ENCODE measurements at regions of chr16 and their contacts with region 1.

Region 1: DNA sequence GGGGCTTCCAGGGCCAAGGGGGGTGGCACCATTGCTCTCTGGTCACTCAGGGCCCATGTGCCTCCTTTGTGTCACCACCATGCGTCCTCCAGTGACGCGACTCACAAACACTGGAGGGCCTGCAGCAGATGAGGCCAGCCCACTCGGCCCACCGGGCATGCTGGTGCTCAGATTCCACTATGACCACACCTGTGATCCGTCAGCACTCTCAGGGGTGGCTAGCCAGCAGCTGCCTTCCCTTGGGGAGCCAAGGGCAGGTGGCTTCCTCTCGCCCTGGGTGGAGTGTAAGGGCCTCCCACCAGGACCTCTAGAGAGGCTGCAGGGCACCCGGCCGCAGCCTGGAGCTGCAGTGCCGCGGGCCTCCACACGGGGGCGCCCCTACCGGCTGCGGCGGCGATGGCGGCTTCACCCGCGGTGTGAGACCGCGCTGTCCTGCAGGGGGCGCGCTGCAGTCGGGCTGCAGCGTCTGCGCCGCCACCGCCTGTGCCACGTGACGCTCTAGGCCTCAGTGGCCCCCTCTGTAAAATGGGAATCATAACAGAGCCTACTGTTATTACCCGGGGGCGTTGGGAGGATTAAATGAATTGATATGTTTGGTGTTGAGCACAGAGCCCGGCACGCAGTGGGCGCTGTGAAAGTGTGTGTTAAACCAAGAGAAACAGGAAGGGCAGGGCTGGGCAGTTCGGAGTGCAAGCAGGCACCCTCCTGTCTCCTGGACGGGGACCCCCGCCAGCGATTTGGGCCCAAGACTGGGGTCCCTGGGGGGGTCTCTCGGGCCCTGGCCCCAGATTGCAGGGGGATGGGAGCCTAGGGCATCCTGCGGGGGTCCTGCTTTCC is 192.4 kb upstream of the GSE1 start:
- DNase-seq: peak; percentile 38 to 43
- H3K4me3 ChIP-seq: no peak overlapping the region
- H3K27ac ChIP-seq: peak overlapping the region in 1 of 3 donors; percentile 42
- H3K4me1 ChIP-seq: peaks cover 3 to 26% of the 10 kb centered on the region in 2 donors
- H3K27me3 ChIP-seq: no peaks in the 10 kb centered on the region
- CTCF ChIP-seq: peak; percentile 69 to 99 (median 98)
- POLR2A ChIP-seq: no peak

Region 2: GRCh38 chr16:85491058-85491771 is 70.5 kb after region 1 on chr16:
- intact Hi-C with region 1: loop called (anchors 10 kb)
- DNase-seq: no peak
- H3K4me3 ChIP-seq: no peak overlapping the region
- H3K27ac ChIP-seq: peak overlapping the region; percentile 75 to 91 (median 83)
- H3K4me1 ChIP-seq: peaks cover 17 to 23% of the 10 kb centered on the region in 2 donors
- H3K27me3 ChIP-seq: no peaks in the 10 kb centered on the region
- CTCF ChIP-seq: peak in 2 of 6 experiments; percentile 23 to 32
- POLR2A ChIP-seq: no peak

Region 3: DNA sequence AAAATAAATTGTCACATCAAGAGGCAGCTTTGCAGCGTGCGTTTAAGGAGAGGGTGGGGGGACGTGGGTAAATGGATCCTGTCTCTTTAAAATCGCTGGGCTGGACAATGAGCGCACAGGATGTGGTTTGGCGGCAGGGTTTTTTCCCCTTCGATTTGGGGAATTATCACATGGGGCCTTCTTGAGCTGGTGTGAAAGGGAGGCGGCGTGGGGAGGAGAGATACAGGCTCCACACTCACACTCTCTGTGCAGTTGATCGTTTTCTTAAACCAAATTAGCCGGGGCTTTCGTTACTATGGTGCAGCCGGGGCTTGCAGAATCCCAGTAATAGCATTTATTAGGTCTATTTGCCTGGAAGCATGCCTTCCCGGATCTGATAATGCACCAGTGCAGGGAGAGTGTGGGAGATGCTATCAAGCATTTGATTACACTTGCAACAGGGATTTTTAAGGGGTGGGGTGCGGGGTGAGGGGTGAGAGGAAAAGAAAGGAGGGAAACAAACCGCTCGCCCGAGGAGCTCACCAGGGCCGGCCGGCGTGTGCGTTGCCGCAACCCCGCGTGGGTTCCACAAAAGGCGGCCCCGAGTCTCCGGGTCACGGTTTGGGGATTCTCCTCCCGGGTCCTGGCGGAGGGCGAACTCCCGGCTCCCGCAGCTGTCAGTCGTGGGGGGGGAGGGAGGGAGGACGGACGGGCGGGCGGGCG is 133.5 kb after region 1 on chr16:
- intact Hi-C with region 1: loop called (anchors 10 kb)
- DNase-seq: peak; percentile 61 to 63
- H3K4me3 ChIP-seq: peak overlapping the region in 2 of 3 donors; percentile 70 to 85
- H3K27ac ChIP-seq: peak overlapping the region; percentile 84 to 96 (median 96)
- H3K4me1 ChIP-seq: peaks cover 24 to 29% of the 10 kb centered on the region in 2 donors
- H3K27me3 ChIP-seq: no peaks in the 10 kb centered on the region
- CTCF ChIP-seq: no peak
- POLR2A ChIP-seq: peak in 1 of 2 donors; percentile 43

Region 4: GRCh38 chr16:85573696-85574641 is 153.2 kb after region 1 on chr16:
- intact Hi-C with region 1: no loop called
- DNase-seq: peak; percentile 80 to 88
- H3K4me3 ChIP-seq: no peak overlapping the region
- H3K27ac ChIP-seq: peak overlapping the region; percentile 73 to 84 (median 74)
- H3K4me1 ChIP-seq: peaks cover 61 to 76% of the 10 kb centered on the region in 2 donors
- H3K27me3 ChIP-seq: no peaks in the 10 kb centered on the region
- CTCF ChIP-seq: no peak
- POLR2A ChIP-seq: peak in 1 of 2 donors; percentile 42

Region 5: GRCh38 chr16:85610508-85611332 is 190.0 kb after region 1 on chr16:
- intact Hi-C with region 1: loop called (anchors 5 kb)
- DNase-seq: peak; percentile 86 to 89
- H3K4me3 ChIP-seq: peak overlapping the region in 1 of 3 donors; percentile 71
- H3K27ac ChIP-seq: peak overlapping the region; percentile 90 to 99 (median 96)
- H3K4me1 ChIP-seq: peaks cover 36 to 69% of the 10 kb centered on the region in 2 donors
- H3K27me3 ChIP-seq: no peaks in the 10 kb centered on the region
- CTCF ChIP-seq: peak; percentile 95 to 99 (median 98)
- POLR2A ChIP-seq: no peak

Region 6: DNA sequence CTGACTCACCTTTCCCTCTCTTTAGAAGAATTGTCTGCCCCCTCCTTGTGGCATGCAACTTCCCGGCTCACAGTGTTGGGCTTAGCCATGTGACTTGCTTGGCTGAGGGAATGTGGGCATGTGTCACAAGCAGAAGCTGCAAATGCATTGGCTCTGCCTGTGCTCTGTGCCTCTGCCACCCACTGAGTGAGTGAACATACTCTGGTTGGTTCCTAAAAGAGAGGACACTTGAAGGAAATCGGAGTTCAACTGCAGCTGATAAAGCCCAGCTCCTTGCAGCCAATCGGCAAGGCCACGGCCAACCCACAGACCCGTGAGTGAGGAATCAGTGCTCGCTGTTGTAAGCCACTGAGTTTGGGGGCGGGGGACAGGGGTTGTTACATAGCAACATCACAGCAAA is 278.9 kb after region 1 on chr16:
- intact Hi-C with region 1: no loop called
- DNase-seq: no peak
- H3K4me3 ChIP-seq: no peak overlapping the region
- H3K27ac ChIP-seq: no peak overlapping the region
- H3K4me1 ChIP-seq: no peaks in the 10 kb centered on the region
- H3K27me3 ChIP-seq: no peaks in the 10 kb centered on the region
- CTCF ChIP-seq: no peak
- POLR2A ChIP-seq: no peak

Measured in thyroid gland (tissue), 4 donors.